MCF 10A (cell line): ENCODE measurements at regions of chr11 and their contacts with region 1.

Region 1: DNA sequence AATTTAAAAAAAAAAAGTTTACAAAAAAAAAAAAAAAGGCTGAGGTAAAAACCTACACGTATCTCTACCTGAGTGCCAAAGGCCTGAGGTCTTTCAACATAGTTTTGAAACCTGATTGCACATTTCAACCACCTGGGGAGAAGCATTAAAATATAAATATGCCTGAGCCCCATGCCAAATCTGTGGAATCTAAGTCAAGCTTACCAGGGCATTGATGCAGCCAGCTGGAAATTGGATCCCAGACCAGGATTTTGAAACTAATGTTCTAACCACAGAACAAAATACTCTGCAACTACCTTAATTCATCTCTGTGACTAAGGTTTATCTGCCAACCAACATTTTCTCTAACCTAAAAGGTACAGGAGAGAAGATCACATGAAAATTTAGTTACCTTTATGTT is 38.8 kb upstream of the CHRNA10 start:
- DNase-seq: peak; percentile 71
- H3K4me3 Mint-ChIP-seq: no peak overlapping the region
- H3K27ac Mint-ChIP-seq: no peak overlapping the region
- H3K4me1 Mint-ChIP-seq: peaks cover 6% of the 10 kb centered on the region
- H3K27me3 Mint-ChIP-seq: no peaks in the 10 kb centered on the region
- CTCF ChIP-seq: no peak

Region 2: DNA sequence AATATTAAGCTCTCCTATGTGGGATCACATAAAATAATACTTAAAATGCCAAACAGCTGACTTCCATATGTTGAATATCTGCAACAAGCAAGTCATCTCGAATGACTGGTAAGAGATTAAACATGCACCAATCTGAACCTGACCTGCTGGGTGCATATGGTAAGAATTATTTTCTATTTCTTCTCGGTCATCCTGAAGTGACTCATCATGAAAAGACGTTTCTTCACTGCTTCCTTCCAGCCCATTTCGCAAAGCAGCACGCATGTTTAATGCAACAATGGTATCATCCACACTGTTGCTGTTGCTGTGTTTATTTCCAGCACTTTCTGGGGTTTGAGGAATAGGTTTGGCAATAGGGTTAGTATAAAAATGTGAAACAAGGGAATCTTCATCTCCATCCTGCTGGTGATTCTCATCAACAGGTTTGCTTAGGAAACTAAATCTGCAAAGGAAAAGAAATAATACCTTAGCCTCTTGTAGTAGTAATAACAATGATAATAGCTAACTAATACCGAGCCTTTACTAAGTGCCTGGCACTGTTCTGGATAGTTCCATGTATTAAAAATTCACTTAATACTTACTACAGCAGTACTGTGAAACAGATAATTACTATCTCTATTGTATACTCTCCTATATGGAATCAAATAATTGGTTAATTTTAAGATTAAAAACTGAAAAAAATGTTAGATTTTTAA is 13.2 kb after region 1 on chr11:
- CTCF ChIA-PET with region 1: interaction called, 3 read pairs
- POLR2A ChIA-PET with region 1: interaction called, 37 read pairs
- intact Hi-C with region 1: no loop called
- DNase-seq: peak; percentile 89
- H3K4me3 Mint-ChIP-seq: no peak overlapping the region
- H3K27ac Mint-ChIP-seq: peak overlapping the region; percentile 83
- H3K4me1 Mint-ChIP-seq: peaks cover 8% of the 10 kb centered on the region
- H3K27me3 Mint-ChIP-seq: no peaks in the 10 kb centered on the region
- CTCF ChIP-seq: no peak